Left lung (tissue), 14 donors: ENCODE measurements at regions of chr9 and their contacts with region 1.

Region 1: GRCh38 chr9:70324963-70325362 is 66.2 kb downstream of the SMC5 start:
- DNase-seq: no peak
- ATAC-seq: no peak
- H3K4me3 ChIP-seq: no peak overlapping the region
- H3K27ac ChIP-seq: no peak overlapping the region
- H3K4me1 ChIP-seq: no peaks in the 10 kb centered on the region
- H3K27me3 ChIP-seq: no peaks in the 10 kb centered on the region
- CTCF ChIP-seq: no peak

Region 2: DNA sequence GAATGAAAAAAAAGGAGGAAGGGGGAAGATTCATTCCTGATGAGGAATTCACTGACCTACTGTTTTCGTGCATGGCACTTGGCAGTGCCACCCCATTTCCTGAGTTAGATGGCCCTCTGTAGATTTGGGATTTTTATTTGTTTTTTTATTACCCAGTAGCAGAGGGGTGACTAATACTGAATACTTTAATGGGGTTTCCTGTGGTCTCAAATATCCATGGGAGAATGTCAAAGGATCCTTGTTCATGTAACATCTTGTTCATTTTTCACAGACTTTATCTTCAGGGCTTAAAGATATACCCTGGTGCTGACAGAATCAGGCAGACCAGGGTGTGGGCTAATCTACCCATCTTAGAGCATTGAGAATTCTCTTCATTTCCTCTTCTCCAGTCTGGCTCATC is 188.3 kb before region 1 on chr9:
- intact Hi-C with region 1: no loop called
- DNase-seq: no peak
- ATAC-seq: no peak
- H3K4me3 ChIP-seq: no peak overlapping the region
- H3K27ac ChIP-seq: no peak overlapping the region
- H3K4me1 ChIP-seq: no peaks in the 10 kb centered on the region
- H3K27me3 ChIP-seq: no peaks in the 10 kb centered on the region
- CTCF ChIP-seq: no peak

Region 3: DNA sequence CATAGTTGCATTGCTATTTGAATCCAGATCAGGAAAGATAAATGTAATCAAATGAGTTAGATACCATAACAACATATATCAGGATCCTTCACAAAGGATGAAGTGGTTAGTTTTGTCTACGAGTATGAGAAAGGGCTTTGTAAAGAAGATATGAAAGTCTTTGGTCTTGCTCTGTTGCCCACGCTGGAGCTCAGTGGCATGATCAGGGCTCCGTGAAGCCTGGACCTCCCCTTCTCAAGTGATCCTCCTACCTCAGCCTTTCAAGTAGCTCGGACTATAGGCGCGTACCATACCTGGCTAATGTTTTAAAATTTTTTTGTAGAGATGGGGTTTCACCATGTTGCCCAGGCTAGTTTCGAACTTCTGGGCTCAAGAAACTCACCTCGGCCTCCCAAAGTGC is 64.4 kb before region 1 on chr9:
- intact Hi-C with region 1: loop called in 1 of 2 experiments (anchors 10 kb)
- DNase-seq: no peak
- ATAC-seq: no peak
- H3K4me3 ChIP-seq: peak overlapping the region in 1 of 2 donors; percentile 67
- H3K27ac ChIP-seq: no peak overlapping the region
- H3K4me1 ChIP-seq: peaks cover 26 to 59% of the 10 kb centered on the region in 2 donors
- H3K27me3 ChIP-seq: no peaks in the 10 kb centered on the region
- CTCF ChIP-seq: no peak

Region 4: DNA sequence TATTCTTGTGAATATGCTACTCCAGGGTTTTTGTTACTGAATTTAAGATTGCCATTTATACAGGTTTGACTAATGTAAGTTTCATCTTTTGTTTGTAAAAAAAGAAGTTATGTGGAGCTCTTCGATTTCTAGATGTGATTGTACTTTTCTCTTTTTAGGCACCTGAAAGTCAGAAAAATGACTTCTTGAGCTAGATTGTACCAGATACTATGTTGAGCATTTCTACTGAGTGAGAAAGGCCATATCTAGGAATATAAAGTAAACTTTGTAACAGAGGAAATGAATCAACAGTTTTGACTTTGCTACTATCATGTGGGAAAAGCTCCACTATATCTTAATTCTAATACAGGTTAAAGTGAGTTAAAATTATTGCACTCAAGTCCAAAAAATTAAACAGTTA is 41.1 kb before region 1 on chr9:
- intact Hi-C with region 1: no loop called
- DNase-seq: no peak
- ATAC-seq: no peak
- H3K4me3 ChIP-seq: no peak overlapping the region
- H3K27ac ChIP-seq: no peak overlapping the region
- H3K4me1 ChIP-seq: no peaks in the 10 kb centered on the region
- H3K27me3 ChIP-seq: no peaks in the 10 kb centered on the region
- CTCF ChIP-seq: no peak